Cardiac septum (tissue), 1 donor: ENCODE measurements at regions of chr7 and their contacts with region 1.

Region 1: GRCh38 chr7:47088329-47089067 is 493.4 kb downstream of the TNS3 start:
- DNase-seq: no peak

Region 2: DNA sequence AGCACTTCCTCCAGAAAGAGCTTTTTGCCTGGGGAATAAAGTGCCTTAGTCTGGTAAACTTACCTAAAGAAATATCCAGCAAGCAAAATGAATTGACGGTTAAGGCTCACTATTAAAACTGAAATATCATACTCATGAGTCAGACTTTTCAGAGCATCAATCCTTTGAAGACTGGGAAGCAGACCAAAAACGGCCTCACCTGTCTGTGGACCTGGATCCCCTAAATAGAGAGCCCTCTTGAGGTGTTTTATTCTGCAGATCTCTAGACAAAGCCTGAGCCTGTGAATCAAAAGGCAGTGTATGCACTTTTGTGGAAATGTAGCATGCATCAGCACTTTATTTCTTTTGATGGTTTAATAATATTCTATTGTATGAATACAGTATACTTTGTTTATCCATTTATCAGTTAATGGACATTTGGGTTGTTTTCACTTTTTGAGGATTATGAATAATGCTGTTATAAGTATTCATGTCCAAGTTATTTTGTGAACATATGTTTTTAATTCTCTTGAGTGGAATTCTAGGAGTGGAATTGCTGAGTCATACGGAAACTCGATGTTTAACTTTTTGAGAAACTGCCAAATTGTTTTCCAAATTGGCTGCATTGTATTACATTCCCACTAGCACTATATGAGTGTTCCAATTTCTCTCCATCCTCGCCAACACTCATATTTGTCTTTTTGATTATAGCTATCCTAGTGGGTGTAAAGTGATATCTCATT is 718.4 kb before region 1 on chr7:
- intact Hi-C with region 1: loop called (anchors 10 kb)
- DNase-seq: no peak

Region 3: DNA sequence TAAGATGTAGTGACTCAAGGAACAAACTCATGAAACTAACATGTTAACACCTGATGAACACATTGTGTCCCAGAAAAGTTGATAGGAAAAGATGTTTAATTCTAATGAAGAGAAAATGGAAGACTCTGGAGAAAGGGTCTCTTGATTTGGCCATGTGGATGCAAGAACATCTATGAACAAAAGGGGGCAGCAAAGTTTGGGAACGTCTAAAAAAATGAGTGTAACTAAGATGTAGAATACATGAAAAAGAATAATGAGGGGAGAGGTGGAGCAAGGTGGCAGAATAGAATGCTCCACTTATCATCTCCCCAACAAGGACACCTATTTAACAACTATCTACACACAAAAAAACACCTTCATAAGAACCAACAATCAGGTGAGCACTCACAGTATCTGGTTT is 311.7 kb before region 1 on chr7:
- intact Hi-C with region 1: loop called (anchors 5 kb)
- DNase-seq: no peak

Region 4: DNA sequence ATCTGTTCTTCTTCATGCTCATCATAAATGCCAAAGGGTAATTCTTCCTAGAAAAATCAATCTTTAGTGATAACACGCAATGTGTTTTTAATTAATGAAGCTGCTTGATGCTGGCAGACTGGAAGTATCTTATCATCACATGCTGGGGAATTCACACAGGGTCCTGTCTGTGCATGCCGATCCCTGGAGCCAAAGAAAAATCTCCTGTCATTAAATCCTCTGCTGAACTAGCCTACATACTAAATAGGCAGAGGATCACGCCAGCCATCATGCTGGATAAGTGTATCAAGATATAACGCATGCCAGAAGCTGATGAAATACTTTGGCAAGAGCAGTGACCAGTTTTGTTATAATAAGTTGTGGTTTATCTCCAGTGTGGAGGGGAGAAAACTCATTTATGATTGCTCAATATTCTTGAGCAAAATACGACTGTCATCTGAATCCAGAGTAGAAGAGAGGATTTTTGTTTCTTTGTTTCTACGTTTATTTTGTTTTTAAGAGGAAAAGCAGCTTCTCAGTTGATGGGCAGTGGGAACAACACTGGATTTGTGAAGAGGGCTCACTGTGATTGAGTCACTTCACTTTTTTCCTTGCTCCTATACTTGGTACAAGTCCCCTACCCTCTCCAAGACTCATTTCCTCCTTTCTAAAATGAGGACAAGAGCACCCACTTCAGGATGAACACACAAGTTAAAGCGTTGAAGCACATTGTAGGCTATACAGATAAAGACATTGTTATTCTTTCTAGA is 155.6 kb before region 1 on chr7:
- intact Hi-C with region 1: loop called (anchors 10 kb)
- DNase-seq: no peak

Region 5: GRCh38 chr7:47056731-47057130 is 31.8 kb before region 1 on chr7:
- intact Hi-C with region 1: no loop called
- DNase-seq: no peak